A549 (cell line): ENCODE measurements at regions of chr20 and their contacts with region 1.

Region 1: GRCh38 chr20:4956200-4956810 is 45.0 kb downstream of the SLC23A2 start:
- DNase-seq: peak; percentile 76 to 79
- ATAC-seq: peak; percentile 80 to 81; a peak in 5 of 6 replicates
- H3K4me3 ChIP-seq: no peak overlapping the region
- H3K27ac ChIP-seq: no peak overlapping the region; a peak in 1 of 6 replicates
- H3K4me1 ChIP-seq: peaks cover 19% of the 10 kb centered on the region
- CTCF ChIP-seq: peak; percentile 97
- EP300 ChIP-seq: no peak
- POLR2A ChIP-seq: no peak
- RAD21 ChIP-seq: peak; percentile 90 to 94

Region 2: GRCh38 chr20:4925842-4926530 is 30.3 kb before region 1 on chr20:
- CTCF ChIA-PET with region 1: interaction called, 12 read pairs
- POLR2A ChIA-PET with region 1: no interaction called
- DNase-seq: peak in 1 of 2 experiments; percentile 49
- ATAC-seq: peak in 1 of 2 experiments; percentile 49; a peak in 3 of 6 replicates
- H3K4me3 ChIP-seq: no peak overlapping the region
- H3K27ac ChIP-seq: peak overlapping the region; percentile 2 to 26; a peak in 2 of 6 replicates
- H3K4me1 ChIP-seq: peaks cover 11% of the 10 kb centered on the region
- CTCF ChIP-seq: no peak
- EP300 ChIP-seq: no peak
- POLR2A ChIP-seq: no peak
- RAD21 ChIP-seq: no peak

Region 3: GRCh38 chr20:4944518-4945313 is 11.6 kb before region 1 on chr20:
- CTCF ChIA-PET with region 1: interaction called, 23 read pairs
- POLR2A ChIA-PET with region 1: no interaction called
- DNase-seq: no peak
- ATAC-seq: no peak
- H3K4me3 ChIP-seq: no peak overlapping the region
- H3K27ac ChIP-seq: no peak overlapping the region
- H3K4me1 ChIP-seq: peaks cover 24% of the 10 kb centered on the region
- CTCF ChIP-seq: no peak
- EP300 ChIP-seq: no peak
- POLR2A ChIP-seq: no peak
- RAD21 ChIP-seq: no peak

Region 4: DNA sequence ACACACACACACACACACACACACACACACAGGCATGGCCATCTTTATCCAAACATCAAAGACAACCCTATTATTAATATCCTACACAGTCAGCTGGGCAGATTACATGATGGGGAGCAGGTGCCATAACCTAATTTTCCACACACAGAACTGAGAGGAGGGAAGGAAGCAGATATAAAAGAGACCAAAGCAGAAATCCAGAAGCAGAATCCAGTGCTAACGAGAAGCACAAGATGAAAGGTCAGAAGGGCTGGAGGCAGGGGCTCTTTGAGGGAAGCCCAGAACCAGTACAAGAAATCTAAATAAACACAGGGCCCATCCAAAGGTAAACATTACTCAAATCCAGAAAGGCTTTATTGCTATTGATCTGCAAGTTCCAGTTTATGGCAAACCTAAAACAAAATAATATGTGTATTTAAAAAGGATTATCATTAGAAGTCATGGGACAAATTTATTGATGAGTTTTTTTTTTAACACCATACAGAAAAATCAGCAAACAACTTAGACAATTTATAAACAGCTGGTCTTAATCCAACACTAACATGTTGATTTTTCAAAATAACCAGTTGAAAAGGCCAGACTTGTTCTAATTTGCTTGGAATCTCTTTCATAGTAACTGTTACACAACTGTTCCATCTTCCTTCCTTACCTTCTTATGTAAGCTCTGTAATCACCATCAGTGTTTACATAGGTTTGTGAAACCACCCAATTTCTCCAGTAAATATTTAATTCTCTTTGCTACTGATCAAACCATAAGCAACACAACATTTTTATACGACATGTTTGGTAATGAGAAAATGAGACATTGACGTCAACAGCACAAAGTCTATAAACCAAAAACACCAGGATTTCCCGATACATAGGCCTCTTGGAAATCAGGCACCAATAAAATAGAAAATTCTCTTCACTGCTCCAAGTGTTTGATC is 10.8 kb after region 1 on chr20:
- CTCF ChIA-PET with region 1: interaction called, 19 read pairs
- POLR2A ChIA-PET with region 1: no interaction called
- DNase-seq: peak in 1 of 2 experiments; percentile 82
- ATAC-seq: peak; percentile 50 to 67; a peak in 5 of 6 replicates
- H3K4me3 ChIP-seq: no peak overlapping the region
- H3K27ac ChIP-seq: peak overlapping the region; percentile 76 to 80
- H3K4me1 ChIP-seq: peaks cover 61% of the 10 kb centered on the region
- CTCF ChIP-seq: no peak
- EP300 ChIP-seq: peak; percentile 91 to 95; a peak in 4 of 5 replicates
- POLR2A ChIP-seq: no peak
- RAD21 ChIP-seq: 0 out of 5 replicates have a peak, but pooled peaks of 1 of the 2 experiments have one; percentile 15